A549 (cell line): ENCODE measurements at regions of chr11 and their contacts with region 1.

Region 1: DNA sequence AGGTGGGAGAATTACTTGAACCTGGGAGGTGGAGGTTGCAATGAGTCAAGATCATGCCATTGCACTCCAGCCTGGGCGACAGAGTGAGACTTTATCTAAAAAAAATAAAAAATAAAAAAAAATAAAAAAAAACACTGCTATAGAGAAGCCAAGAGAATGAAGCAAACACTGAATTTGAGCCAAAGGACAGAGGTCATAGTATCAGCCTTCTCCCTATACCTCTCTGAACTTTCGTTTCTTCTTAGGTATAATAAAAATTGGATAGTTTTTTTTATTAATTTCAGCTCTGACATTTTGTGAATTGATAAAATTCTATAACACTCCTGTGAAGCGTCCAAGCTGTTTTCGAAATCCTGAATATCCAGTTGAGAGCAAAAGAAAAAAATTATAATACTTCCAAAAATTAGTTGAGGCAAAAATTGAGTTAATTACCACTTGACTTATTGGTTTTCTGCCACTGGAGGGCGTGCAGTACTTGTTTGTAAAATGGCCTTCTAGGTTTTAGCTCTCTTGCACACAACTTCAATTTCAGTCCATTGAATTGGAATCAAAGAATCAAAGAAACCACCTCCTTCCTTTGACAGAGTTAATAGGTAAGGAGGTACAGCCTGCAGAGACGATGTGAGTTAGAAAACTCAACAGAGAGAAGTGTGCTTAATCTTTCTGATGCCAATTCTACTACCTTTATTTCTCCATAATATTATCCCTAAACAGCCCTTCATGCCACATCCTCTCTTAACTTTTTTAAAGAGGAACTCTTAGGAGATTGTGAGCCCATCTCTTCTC is 143.2 kb downstream of the BBOX1 start:
- DNase-seq: peak; percentile 33 to 78
- ATAC-seq: peak; percentile 34 to 78; a peak in 3 of 6 replicates
- H3K4me3 ChIP-seq: no peak overlapping the region
- H3K27ac ChIP-seq: peak overlapping the region; percentile 32 to 44
- H3K4me1 ChIP-seq: peaks cover 18% of the 10 kb centered on the region
- CTCF ChIP-seq: peak; percentile 95
- EP300 ChIP-seq: no peak
- POLR2A ChIP-seq: no peak
- RAD21 ChIP-seq: peak; percentile 97

Region 2: GRCh38 chr11:27209562-27210005 is 25.7 kb after region 1 on chr11:
- CTCF ChIA-PET with region 1: interaction called, 11 read pairs
- POLR2A ChIA-PET with region 1: no interaction called
- DNase-seq: peak; percentile 85 to 94
- ATAC-seq: peak; percentile 92
- H3K4me3 ChIP-seq: no peak overlapping the region
- H3K27ac ChIP-seq: peak overlapping the region; percentile 64 to 77; a peak in 5 of 6 replicates
- H3K4me1 ChIP-seq: peaks cover 75% of the 10 kb centered on the region
- CTCF ChIP-seq: no peak
- EP300 ChIP-seq: peak; percentile 53 to 67; a peak in 3 of 5 replicates
- POLR2A ChIP-seq: no peak
- RAD21 ChIP-seq: peak; percentile 16 to 35; a peak in 2 of 5 replicates

Region 3: DNA sequence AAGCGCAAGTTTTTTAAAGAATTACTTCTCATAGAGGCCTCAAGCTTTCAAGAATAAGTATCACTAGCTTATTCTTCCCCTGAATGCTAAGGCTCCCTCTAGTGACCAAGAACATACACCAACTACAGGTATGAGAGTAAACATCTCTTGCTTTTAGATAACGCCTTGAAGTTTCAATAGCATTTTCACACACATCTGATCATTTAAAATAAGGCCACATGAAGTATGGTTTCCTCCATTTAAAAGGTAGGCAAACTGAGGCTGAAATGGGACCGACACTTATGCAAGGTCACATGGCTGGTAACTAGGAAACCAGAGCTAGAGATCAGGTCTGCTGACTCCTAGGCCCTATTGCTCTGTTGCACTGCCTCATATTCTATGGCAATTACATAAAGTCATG is 112.6 kb after region 1 on chr11:
- CTCF ChIA-PET with region 1: interaction called, 126 read pairs
- POLR2A ChIA-PET with region 1: no interaction called
- DNase-seq: peak; percentile 36 to 72
- ATAC-seq: peak; percentile 77 to 96; a peak in 5 of 6 replicates
- H3K4me3 ChIP-seq: no peak overlapping the region
- H3K27ac ChIP-seq: no peak overlapping the region
- H3K4me1 ChIP-seq: no peaks in the 10 kb centered on the region
- CTCF ChIP-seq: peak; percentile 79
- EP300 ChIP-seq: no peak
- POLR2A ChIP-seq: no peak
- RAD21 ChIP-seq: peak; percentile 81

Region 4: DNA sequence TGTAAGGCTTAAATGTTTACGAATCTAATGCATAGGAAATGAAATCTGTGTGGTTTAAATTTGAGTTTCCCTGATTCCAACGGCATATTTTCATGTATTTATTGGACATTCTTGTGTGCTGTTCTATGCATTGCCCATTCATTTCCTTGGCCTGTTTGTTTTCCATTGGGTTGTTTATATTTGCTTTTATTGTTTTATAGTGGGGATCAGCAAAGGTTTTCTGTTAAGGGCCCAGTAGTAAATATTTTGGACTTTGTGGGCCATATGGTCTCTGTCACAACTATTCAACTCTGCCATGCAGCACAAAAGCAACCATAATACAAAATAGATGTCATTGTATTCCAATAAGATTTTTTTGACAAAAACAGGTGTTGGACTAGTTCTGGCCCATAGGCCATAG is 294.0 kb after region 1 on chr11:
- CTCF ChIA-PET with region 1: interaction called, 146 read pairs
- POLR2A ChIA-PET with region 1: interaction called, 4 read pairs
- DNase-seq: no peak
- ATAC-seq: no peak
- H3K4me3 ChIP-seq: no peak overlapping the region
- H3K27ac ChIP-seq: no peak overlapping the region
- H3K4me1 ChIP-seq: 0 out of 3 replicates have a peak, but pooled peaks cover 5% of the 10 kb centered on the region
- CTCF ChIP-seq: no peak
- EP300 ChIP-seq: no peak
- POLR2A ChIP-seq: no peak
- RAD21 ChIP-seq: no peak